ENCODE measurements at regions of chr21 and their contacts with region 1.

Region 1: DNA sequence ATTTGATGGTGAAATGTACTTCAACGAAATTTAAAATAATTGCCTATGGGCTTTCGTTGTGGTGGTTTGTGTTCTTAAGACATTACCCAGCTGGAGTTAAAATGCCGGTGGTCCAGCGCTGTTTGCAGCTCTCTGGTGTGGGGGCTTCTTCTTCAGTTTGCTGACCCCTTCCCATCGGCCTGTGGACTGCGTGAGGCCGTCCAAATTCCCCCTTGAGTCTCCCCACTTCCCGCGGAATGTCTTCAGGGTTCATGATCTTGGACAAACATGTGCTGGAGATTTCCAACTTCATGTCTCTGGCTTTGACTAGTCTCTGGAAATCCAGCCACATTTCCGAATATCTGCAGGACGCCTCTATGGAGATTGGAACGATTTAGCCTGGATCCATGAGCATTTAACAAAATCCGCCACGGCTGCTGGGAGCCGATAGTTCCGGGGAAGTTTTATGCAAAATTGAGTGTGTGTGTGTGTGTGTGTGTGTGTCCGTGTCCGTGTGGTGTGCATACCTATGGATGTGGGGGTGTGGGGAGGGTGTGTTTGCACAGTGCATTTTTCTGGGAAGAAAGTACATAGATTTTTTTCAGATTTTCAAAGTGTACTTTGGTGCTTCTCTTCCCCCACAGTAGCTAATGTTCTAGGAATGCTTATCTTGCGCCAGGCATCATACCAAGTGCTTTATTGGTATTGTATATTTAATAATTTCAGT is 117.2 kb downstream of the PCP4 start:
- DNase-seq: no peak
- H3K4me3 ChIP-seq: no peak overlapping the region
- H3K27ac ChIP-seq: no peak overlapping the region
- H3K4me1 ChIP-seq: peaks cover 6% of the 10 kb centered on the region
- H3K27me3 ChIP-seq: no peaks in the 10 kb centered on the region
- CTCF ChIP-seq: no peak
- POLR2A ChIP-seq: no peak

Region 2: DNA sequence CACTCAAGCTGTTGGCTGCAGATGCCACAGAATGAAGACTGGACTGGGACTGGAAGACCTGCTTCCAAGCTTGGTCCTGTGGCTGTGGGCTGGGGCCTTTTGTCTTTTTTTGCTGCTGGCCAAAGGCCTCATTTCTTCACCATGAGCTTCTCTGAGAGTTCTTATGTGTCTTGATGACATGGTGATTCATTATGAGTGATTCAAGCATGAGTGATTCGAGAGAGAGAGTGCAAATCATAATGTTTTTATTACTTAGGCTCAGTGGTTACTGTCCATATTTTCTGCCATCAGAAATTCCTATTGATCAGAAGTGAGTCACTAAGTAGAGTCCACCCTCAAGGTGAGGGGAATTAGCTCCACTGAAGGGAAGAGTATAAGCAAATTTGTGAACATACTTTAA is 23.2 kb before region 1 on chr21:
- intact Hi-C with region 1: no loop called
- DNase-seq: no peak
- H3K4me3 ChIP-seq: no peak overlapping the region
- H3K27ac ChIP-seq: no peak overlapping the region
- H3K4me1 ChIP-seq: no peaks in the 10 kb centered on the region
- H3K27me3 ChIP-seq: no peaks in the 10 kb centered on the region
- CTCF ChIP-seq: no peak
- POLR2A ChIP-seq: no peak

Region 3: GRCh38 chr21:40049394-40050290 is 65.2 kb after region 1 on chr21:
- intact Hi-C with region 1: loop called (anchors 10 kb)
- DNase-seq: no peak
- H3K4me3 ChIP-seq: no peak overlapping the region
- H3K27ac ChIP-seq: peak overlapping the region; percentile 0
- H3K4me1 ChIP-seq: peaks cover 12% of the 10 kb centered on the region
- H3K27me3 ChIP-seq: no peaks in the 10 kb centered on the region
- CTCF ChIP-seq: no peak
- POLR2A ChIP-seq: no peak

Measured in vagina (tissue), 2 donors.